Activated CD4-positive, alpha-beta T cell treated with anti-CD3 and anti-CD28 coated beads for 36 hours (primary cell): ENCODE measurements at regions of chr22 and their contacts with region 1.

Region 1: GRCh38 chr22:31230871-31231621 is 18.9 kb downstream of the LIMK2 start:
- DNase-seq: peak; percentile 57
- ATAC-seq: peak; percentile 67
- H3K4me3 Mint-ChIP-seq: no peak overlapping the region
- H3K27ac Mint-ChIP-seq: peak overlapping the region; percentile 10
- H3K4me1 Mint-ChIP-seq: peaks cover 32% of the 10 kb centered on the region
- H3K27me3 Mint-ChIP-seq: no peaks in the 10 kb centered on the region

Region 2: DNA sequence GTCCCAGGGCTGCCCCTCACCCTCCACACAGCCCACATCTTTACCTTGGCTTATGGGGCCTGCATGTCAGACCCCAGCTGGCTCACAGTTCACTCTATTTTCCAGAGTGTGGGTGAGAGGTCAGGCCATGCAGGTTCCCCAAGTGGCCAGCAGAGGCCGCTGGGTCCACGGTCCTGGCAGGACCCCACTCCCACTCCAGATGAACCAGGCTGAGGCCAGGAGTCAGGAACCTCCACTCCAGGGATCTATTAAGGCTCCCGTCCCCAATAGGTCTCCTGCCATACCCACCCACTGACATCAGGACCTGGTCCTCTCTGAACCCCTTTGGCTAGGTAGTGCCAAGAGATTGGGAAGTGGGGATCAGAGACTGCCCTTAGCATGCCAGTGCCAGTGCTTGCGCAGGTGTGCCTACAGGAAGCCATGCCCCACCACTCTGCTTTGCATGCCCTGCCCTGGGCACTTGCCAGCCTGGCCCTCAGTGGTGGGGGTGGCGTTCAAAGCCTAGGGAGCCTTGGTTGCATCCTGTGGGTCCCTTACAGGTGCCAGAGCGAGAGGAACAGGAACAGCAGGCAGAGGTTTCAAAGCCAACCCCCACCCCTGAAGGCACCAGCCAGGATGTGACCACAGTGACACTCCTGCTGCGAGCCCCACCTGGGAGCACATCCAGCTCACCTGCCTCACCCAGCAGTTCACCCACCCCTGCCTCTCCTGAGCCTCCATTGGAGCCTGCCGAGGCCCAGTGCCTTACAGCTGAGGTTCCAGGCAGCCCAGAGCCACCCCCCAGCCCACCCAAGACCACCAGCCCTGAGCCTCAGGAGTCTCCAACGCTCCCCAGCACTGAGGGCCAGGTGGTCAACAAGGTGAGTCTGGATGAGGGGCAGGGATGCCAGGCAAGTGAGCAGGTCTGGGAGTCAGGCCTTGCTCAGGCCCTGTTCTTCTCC is 141.6 kb before region 1 on chr22:
- CTCF ChIA-PET with region 1: interaction called, 3 read pairs
- POLR2A ChIA-PET with region 1: no interaction called
- intact Hi-C with region 1: loop called (anchors 1 to 2 kb)
- DNase-seq: peak; percentile 60
- ATAC-seq: no peak
- H3K4me3 Mint-ChIP-seq: no peak overlapping the region
- H3K27ac Mint-ChIP-seq: no peak overlapping the region
- H3K4me1 Mint-ChIP-seq: peaks cover 1% of the 10 kb centered on the region
- H3K27me3 Mint-ChIP-seq: no peaks in the 10 kb centered on the region